ENCODE measurements at regions of chr16 and their contacts with region 1.

Region 1: DNA sequence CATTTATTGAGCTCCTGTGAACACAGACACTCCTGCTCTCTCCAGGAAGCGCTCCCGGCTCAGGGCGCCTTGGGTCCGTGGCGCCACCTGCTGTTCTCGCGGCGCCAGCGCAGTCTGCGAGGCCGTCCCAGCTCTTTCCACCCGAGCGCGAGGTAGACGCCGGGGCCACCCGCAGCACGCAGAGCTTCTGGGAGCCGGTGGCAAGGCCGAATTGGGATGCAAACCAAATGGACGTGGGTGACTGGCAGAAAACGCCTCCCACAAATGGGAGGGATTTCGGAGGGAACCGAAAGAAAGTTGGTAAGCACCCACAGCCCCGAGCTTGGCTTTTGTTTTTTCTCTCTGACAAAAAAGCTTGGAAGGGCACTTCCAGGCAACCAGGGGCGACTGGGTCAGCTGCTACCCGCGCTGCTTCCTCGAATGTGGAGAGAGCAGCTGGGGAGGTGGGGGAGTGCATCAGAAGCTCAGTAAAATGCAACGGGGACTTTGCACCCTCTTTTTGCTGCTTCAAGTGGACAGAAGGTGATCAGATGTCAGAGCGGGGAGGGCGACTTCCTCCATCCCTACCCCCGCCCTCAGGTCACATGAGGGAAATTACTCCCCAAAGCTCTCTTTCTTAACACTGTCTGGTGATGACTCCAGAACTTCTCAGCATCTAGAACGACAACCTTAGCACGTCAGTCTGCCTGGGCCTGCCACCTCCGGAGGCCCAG is 13.5 kb upstream of the N4BP1 start:
- DNase-seq: peak; percentile 85
- H3K4me3 Mint-ChIP-seq: peak overlapping the region; percentile 71
- H3K27ac Mint-ChIP-seq: no peak overlapping the region
- H3K4me1 Mint-ChIP-seq: peaks cover 36% of the 10 kb centered on the region
- H3K27me3 Mint-ChIP-seq: peaks cover 10% of the 10 kb centered on the region

Region 2: GRCh38 chr16:48231727-48232492 is 391.6 kb before region 1 on chr16:
- CTCF ChIA-PET with region 1: interaction called, 28 read pairs
- POLR2A ChIA-PET with region 1: interaction called, 4 read pairs
- DNase-seq: peak; percentile 56
- H3K4me3 Mint-ChIP-seq: no peak overlapping the region
- H3K27ac Mint-ChIP-seq: peak overlapping the region; percentile 41
- H3K4me1 Mint-ChIP-seq: peaks cover 21% of the 10 kb centered on the region
- H3K27me3 Mint-ChIP-seq: no peaks in the 10 kb centered on the region

Region 3: DNA sequence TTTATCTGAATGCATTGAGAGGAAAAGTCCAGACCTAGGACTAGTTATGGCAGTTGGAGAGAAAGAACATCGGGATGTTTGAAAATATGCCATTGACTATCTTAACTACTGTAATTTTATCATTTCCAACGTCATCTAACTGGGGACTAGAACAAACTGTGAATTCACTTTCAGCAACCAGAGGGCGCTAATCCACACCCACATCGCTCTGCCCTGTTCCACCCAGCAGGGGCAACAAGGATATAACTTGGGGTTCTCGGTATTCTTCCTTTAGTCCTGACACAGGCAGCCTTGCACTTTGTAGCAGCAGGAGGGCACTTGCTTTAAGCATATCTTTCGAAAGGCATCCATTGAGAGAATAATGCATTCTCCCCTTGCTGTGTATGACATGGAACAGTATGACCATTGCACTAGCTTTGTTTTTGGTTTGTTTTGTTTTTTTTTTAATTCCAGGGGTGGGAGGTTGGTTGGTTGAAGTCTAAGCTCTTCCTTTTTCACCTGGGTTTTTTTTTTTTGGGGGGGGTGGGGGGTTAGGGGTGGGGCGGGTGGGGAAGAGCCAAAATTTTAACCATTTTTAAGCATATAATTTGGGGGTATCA is 269.8 kb before region 1 on chr16:
- CTCF ChIA-PET with region 1: interaction called, 116 read pairs
- POLR2A ChIA-PET with region 1: interaction called, 4 read pairs
- DNase-seq: peak; percentile 73
- H3K4me3 Mint-ChIP-seq: no peak overlapping the region
- H3K27ac Mint-ChIP-seq: peak overlapping the region; percentile 55
- H3K4me1 Mint-ChIP-seq: peaks cover 13% of the 10 kb centered on the region
- H3K27me3 Mint-ChIP-seq: no peaks in the 10 kb centered on the region

Region 4: DNA sequence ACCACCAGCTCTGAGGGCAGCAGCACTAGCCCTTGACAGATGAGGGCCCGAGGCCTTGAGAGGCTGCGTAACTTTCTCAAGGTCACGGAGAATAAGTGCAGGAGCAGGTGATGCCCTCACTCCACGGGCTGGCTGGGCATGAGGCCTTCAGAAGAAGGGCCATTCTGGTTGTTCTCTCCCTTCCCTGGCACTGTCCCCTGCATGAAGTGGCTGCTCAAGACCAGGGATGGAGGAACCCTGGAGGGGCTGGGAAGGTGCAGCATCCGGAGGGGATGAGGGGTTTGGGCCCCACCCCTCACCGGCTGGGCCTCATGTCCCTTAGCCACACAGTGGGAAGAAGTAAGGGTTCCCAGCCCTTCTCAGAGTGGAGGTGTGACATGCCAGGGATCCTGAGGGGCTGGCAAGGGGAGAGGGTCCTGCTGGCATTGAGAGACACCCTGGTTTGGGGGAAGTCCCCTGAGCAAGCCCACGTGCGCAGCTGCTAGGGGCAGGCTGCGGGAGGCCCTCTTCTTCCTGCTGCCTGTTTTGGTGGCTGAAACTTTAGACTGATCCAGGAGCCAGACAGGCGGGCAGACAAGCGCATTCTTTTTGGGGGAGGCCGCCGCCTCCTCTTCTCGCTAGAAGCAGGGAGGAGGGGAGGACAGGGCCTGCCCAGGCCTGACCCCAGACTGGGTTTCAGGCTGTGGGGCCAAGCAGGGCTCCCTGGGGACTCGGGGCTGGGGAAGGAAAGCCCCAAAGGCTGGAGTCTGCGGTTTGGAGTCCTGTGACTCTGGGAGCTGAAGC is 87.4 kb before region 1 on chr16:
- CTCF ChIA-PET with region 1: interaction called, 89 read pairs
- POLR2A ChIA-PET with region 1: no interaction called
- DNase-seq: no peak
- H3K4me3 Mint-ChIP-seq: no peak overlapping the region
- H3K27ac Mint-ChIP-seq: no peak overlapping the region
- H3K4me1 Mint-ChIP-seq: peaks cover 19% of the 10 kb centered on the region
- H3K27me3 Mint-ChIP-seq: no peaks in the 10 kb centered on the region

Region 5: GRCh38 chr16:48562475-48562874 is 61.0 kb before region 1 on chr16:
- CTCF ChIA-PET with region 1: interaction called, 53 read pairs
- POLR2A ChIA-PET with region 1: interaction called, 7 read pairs
- DNase-seq: no peak
- H3K4me3 Mint-ChIP-seq: no peak overlapping the region
- H3K27ac Mint-ChIP-seq: no peak overlapping the region
- H3K4me1 Mint-ChIP-seq: peaks cover 70% of the 10 kb centered on the region
- H3K27me3 Mint-ChIP-seq: no peaks in the 10 kb centered on the region

Region 6: GRCh38 chr16:48603647-48604376 is 19.6 kb before region 1 on chr16:
- CTCF ChIA-PET with region 1: interaction called, 143 read pairs
- POLR2A ChIA-PET with region 1: interaction called, 39 read pairs
- DNase-seq: no peak
- H3K4me3 Mint-ChIP-seq: no peak overlapping the region
- H3K27ac Mint-ChIP-seq: peak overlapping the region; percentile 0
- H3K4me1 Mint-ChIP-seq: peaks cover 37% of the 10 kb centered on the region
- H3K27me3 Mint-ChIP-seq: no peaks in the 10 kb centered on the region

Region 7: GRCh38 chr16:48647794-48648193 is 24.3 kb after region 1 on chr16:
- CTCF ChIA-PET with region 1: no interaction called
- POLR2A ChIA-PET with region 1: no interaction called
- DNase-seq: no peak
- H3K4me3 Mint-ChIP-seq: no peak overlapping the region
- H3K27ac Mint-ChIP-seq: no peak overlapping the region
- H3K4me1 Mint-ChIP-seq: no peaks in the 10 kb centered on the region
- H3K27me3 Mint-ChIP-seq: peaks cover 12% of the 10 kb centered on the region

Region 8: DNA sequence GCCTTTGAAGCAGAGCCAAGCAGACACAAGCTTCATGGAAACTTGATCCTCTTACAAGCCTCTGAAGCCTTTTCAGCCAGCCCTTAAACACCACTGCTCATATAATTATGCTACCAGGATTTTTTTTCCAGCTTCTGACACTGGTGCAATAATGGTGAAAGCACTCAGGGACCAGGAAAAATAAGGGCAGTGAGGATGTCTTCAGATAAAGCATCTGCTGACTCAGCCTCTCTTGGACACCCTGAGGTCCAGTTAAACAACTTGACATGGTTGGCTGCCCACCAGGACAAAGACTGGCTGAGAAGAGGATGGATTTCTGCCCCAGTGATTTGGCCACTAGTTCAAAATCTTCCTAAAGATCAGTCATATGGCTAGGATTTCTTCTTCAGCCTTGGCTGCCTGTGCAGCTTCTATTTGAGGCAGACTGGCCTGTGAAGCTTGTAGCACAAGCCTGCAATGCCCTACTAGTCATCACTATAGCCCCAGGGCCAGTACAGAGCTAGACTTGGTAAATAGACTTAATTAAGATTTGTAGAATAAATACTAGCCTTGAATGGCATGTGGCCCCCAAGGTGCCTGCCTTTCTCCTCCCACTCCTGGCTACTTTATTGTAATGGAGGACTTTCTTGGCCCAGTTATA is 110.9 kb after region 1 on chr16:
- CTCF ChIA-PET with region 1: no interaction called
- POLR2A ChIA-PET with region 1: no interaction called
- DNase-seq: no peak
- H3K4me3 Mint-ChIP-seq: no peak overlapping the region
- H3K27ac Mint-ChIP-seq: no peak overlapping the region
- H3K4me1 Mint-ChIP-seq: no peaks in the 10 kb centered on the region
- H3K27me3 Mint-ChIP-seq: no peaks in the 10 kb centered on the region

Measured in activated CD4-positive, alpha-beta memory T cell treated with anti-CD3 and anti-CD28 coated beads, Interleukin-2, amount 10 ng/mL, durations not matched to agents 7 days and 5 days (primary cell).